Activated T-helper 2 cell treated with anti-CD3 and anti-CD28 coated beads, Interferon-gamma antibody, Interleukin-2, Interleukin-4, amounts not matched to agents 10 μg/mL and 5 μg/mL and 100 μg/mL, durations not matched to agents 14 hours and 24 hours and 36 hours (primary cell): ENCODE measurements at regions of chr6 and their contacts with region 1.

Region 1: GRCh38 chr6:88780714-88781389 is 182.6 kb downstream of the RNGTT start:
- DNase-seq: peak; percentile 20
- H3K4me3 Mint-ChIP-seq: no peak overlapping the region
- H3K27ac Mint-ChIP-seq: no peak overlapping the region
- H3K4me1 Mint-ChIP-seq: peaks cover 1% of the 10 kb centered on the region
- H3K27me3 Mint-ChIP-seq: no peaks in the 10 kb centered on the region

Region 2: DNA sequence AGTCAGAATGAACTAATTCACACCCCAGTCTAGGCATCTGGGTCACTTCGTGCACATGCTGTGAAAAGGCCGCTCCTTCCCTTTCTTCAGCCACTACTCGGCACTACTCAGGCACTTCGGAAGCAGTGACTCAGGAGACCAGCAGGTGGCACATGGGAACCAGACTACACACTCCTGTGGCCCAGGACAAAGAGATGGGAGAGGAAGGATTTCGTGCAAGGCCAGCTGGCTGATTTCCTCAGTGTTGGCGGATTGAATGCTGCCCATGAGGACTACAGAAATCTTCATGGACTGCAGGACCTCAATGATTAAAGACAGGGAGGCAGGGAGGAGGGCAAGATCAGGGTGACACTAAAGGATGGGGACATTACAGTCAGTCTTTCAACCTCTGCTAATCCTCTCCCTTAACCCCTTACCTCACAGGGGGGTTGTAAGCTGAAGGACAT is 851.0 kb before region 1 on chr6:
- intact Hi-C with region 1: loop called (anchors 5 kb)
- DNase-seq: peak; percentile 27
- H3K4me3 Mint-ChIP-seq: no peak overlapping the region
- H3K27ac Mint-ChIP-seq: no peak overlapping the region
- H3K4me1 Mint-ChIP-seq: peaks cover 11% of the 10 kb centered on the region
- H3K27me3 Mint-ChIP-seq: peaks cover 5% of the 10 kb centered on the region